SK-N-SH (cell line): ENCODE measurements at regions of chr22 and their contacts with region 1.

Region 1: GRCh38 chr22:35231585-35232084 is 25.7 kb upstream of the HMGXB4 start:
- DNase-seq: peak; percentile 60
- H3K4me3 ChIP-seq: peak overlapping the region in 1 of 2 experiments; percentile 36; a peak in 2 of 4 replicates
- H3K27ac ChIP-seq: no peak overlapping the region
- H3K4me1 ChIP-seq: peaks cover 0 to 4% of the 10 kb centered on the region in 2 experiments; a peak in 1 of 4 replicates
- H3K27me3 ChIP-seq: no peaks in the 10 kb centered on the region; the same call in 1 of the 2 replicates
- CTCF ChIP-seq: peak; percentile 95
- EP300 ChIP-seq: no peak
- RAD21 ChIP-seq: peak; percentile 67

Region 2: DNA sequence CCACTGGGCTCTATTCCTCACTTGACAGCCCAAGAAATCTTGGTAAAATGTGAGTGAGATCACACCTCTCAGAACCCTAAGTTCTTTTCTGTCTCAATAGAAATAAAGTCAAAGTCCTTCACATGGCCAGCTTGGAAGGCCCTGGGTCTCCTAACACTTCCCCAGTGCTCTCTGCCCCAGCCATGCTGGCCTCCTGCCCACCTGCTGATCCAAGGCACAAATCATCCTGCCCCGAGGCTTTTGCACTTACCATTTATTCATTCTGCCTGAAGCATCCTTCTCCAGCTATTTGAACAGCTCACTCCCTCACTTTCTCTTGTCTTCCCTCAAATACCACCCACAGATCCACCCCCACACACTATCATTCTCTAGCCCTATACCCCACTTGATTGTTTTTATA is 139.2 kb before region 1 on chr22:
- CTCF ChIA-PET with region 1: no interaction called
- POLR2A ChIA-PET with region 1: no interaction called
- DNase-seq: no peak
- H3K4me3 ChIP-seq: no peak overlapping the region
- H3K27ac ChIP-seq: no peak overlapping the region
- H3K4me1 ChIP-seq: no peaks in the 10 kb centered on the region
- H3K27me3 ChIP-seq: no peaks in the 10 kb centered on the region
- CTCF ChIP-seq: no peak
- EP300 ChIP-seq: no peak
- RAD21 ChIP-seq: no peak

Region 3: DNA sequence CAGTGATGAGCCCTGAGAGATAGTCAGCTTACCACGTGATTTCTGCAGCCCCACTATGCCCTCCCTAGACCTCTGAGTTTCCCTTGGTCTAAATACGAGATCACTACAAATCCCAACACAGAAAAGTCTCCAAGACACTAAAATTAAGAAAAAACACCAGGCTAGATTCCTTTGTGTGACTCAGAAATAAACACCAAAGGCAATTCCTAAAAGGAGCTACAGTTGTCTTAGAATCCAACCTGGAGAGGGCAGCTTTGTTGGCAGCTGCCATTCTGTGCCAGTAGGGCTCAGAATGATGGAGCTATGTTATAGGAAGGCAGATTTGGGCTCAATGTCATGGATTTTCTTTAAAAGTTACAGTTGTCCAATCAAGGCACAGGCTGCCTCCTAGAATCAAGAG is 11.4 kb before region 1 on chr22:
- CTCF ChIA-PET with region 1: interaction called, 16 read pairs
- POLR2A ChIA-PET with region 1: no interaction called
- DNase-seq: no peak
- H3K4me3 ChIP-seq: no peak overlapping the region
- H3K27ac ChIP-seq: no peak overlapping the region
- H3K4me1 ChIP-seq: no peaks in the 10 kb centered on the region; a peak in 1 of 4 replicates
- H3K27me3 ChIP-seq: no peaks in the 10 kb centered on the region; the same call in 1 of the 2 replicates
- CTCF ChIP-seq: no peak
- EP300 ChIP-seq: no peak
- RAD21 ChIP-seq: no peak

Region 4: GRCh38 chr22:35250156-35250555 is 18.5 kb after region 1 on chr22:
- CTCF ChIA-PET with region 1: interaction called, 12 read pairs
- POLR2A ChIA-PET with region 1: no interaction called
- DNase-seq: no peak
- H3K4me3 ChIP-seq: no peak overlapping the region
- H3K27ac ChIP-seq: no peak overlapping the region
- H3K4me1 ChIP-seq: no peaks in the 10 kb centered on the region
- H3K27me3 ChIP-seq: no peaks in the 10 kb centered on the region; the same call in 1 of the 2 replicates
- CTCF ChIP-seq: no peak
- EP300 ChIP-seq: no peak
- RAD21 ChIP-seq: no peak

Region 5: GRCh38 chr22:35357883-35358621 is 126.4 kb after region 1 on chr22:
- CTCF ChIA-PET with region 1: no interaction called
- POLR2A ChIA-PET with region 1: no interaction called
- DNase-seq: no peak
- H3K4me3 ChIP-seq: no peak overlapping the region
- H3K27ac ChIP-seq: no peak overlapping the region
- H3K4me1 ChIP-seq: no peaks in the 10 kb centered on the region
- H3K27me3 ChIP-seq: no peaks in the 10 kb centered on the region
- CTCF ChIP-seq: no peak
- EP300 ChIP-seq: no peak
- RAD21 ChIP-seq: no peak

Region 6: DNA sequence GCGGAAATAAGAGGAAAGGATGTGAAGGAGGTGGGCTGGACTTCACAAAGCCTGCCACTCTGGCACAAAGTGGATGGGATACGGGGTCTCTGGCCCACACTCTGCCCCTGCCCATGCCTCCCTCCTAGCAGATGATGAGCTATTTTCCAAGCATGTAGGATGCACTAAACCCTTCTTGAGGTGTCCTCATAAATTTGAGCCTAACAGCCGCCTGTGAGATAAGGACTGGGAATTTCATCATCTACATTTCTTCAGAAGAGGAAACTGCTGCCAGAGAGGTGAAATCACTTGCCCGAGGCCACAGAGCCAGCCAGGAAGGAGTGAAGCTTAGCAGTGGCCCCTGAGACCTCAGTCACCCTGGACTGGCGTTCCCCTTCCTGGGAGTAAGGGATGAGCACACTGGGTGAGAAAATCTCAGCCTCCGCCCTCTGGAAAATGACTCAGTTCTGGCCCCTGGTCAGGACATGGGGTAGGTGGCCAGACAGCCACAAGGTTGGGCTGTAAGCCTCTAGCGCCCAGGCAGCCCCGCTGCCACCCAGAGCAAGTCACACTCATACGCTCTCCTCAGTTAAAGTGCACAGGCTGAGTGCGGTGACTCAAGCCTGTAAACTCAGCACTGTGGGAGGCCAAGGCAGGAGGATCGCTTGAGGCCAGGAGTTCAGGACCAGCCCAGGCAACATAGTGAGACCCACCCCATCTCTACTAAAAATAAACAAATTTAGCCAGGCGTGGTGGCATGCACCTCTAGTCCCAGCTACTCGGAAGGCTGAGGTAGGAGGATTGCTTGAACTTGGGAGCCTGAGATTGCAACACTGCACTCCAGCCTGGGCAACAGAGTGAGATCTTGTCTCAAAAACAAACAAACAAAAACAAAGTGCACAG is 357.7 kb after region 1 on chr22:
- CTCF ChIA-PET with region 1: no interaction called
- POLR2A ChIA-PET with region 1: no interaction called
- DNase-seq: no peak
- H3K4me3 ChIP-seq: no peak overlapping the region
- H3K27ac ChIP-seq: peak overlapping the region in 1 of 2 experiments; percentile 52; a peak in 2 of 4 replicates
- H3K4me1 ChIP-seq: peaks cover 4 to 46% of the 10 kb centered on the region in 2 experiments; a peak in 2 of 4 replicates
- H3K27me3 ChIP-seq: no peaks in the 10 kb centered on the region
- CTCF ChIP-seq: no peak
- EP300 ChIP-seq: peak in 1 of 2 experiments; percentile 23; a peak in 1 of 4 replicates
- RAD21 ChIP-seq: no peak